Activated CD4-positive, alpha-beta T cell treated with anti-CD3 and anti-CD28 coated beads for 36 hours (primary cell): ENCODE measurements at regions of chr1 and their contacts with region 1.

Region 1: DNA sequence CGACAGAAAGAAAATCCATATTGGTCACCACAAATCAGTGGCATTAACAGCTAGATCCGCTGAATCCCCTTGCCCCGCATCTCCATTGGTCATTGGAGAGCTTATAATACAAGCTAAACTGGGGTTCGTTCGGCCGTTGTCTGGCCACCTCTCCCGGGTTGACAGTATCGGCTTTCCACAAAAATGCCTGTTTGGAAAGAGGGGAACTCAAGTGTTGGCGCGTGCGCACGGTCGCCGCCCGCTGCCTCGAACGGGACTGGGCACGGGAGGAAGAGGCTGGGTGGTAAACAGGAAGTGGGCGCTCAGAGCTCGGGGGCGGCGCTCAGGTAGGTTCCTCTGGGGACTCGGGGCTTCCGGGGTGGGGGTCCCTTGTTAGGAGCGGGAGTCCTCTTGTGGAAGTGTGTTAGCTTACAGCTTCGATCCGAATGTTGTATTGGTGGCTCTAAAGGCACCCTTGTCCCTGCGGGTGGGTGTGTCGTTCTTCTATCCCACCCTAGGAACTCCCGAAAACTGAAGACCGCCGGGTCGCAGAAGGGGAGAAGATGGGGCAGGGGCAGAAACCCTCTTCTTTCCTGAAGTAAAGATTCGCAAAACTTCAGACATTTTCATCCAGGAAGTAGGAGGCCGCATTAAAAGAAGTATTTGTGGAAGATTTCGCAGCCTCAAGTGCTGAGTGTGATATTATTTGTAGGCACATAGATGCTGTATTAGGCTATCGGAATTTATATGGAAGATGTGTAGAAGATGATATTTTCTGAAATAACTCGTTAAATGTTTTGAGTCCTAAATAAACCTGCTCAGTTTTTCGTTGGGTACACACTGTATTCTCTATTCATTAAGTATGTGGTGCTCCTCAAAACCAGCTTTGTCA is 962 bp downstream of the BROX start:
- DNase-seq: peak; percentile 92
- ATAC-seq: peak; percentile 68
- H3K4me3 Mint-ChIP-seq: peak overlapping the region; percentile 98
- H3K27ac Mint-ChIP-seq: peak overlapping the region; percentile 100
- H3K4me1 Mint-ChIP-seq: peaks cover 37% of the 10 kb centered on the region
- H3K27me3 Mint-ChIP-seq: no peaks in the 10 kb centered on the region

Region 2: DNA sequence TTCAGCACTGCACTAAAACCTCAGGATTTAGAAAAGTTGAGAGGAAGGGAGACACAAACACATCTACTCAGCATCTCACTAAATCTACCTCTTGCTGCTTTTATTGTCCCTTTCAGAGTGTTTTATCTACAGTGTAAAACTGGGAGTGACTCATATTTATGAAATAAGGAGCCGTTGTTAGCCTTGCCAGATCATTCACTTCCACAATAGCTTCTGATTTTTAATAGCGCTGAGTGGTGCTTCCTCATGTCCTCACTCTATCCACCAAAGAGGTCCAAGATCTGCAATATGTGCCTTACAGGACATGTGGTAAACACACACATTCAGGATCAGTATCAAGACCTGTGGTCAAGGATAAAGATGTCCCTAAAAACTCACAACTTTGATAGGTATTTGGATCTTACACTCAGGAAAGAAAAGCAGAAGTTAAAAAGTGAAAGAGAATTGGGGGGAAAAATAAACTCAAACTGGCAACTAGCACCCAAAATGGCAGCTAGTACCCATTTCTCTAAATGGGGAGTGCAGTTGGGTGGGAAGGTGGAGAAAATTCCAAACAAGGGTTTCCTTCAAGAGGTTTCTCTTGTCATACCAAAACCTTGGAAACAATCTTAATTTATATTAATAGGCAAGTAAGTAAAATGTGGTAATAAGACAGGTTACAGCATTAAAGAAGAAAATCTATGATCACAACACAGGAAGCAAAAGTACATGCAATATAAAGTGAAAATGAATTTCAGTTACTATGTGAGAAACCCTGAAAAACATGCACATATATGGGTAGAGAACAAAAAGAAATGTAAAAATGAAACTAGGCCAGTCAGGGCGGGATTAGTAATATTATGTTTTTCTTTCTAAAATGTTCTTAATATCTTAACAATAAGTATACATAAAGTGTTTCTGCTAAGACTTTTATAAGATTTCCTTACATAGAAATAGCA is 987.3 kb before region 1 on chr1:
- CTCF ChIA-PET with region 1: no interaction called
- POLR2A ChIA-PET with region 1: no interaction called
- intact Hi-C with region 1: loop called in 1 of 2 experiments (anchors 5 kb)
- DNase-seq: no peak
- ATAC-seq: peak; percentile 86
- H3K4me3 Mint-ChIP-seq: peak overlapping the region; percentile 39
- H3K27ac Mint-ChIP-seq: peak overlapping the region; percentile 94
- H3K4me1 Mint-ChIP-seq: peaks cover 78% of the 10 kb centered on the region
- H3K27me3 Mint-ChIP-seq: no peaks in the 10 kb centered on the region

Region 3: GRCh38 chr1:222617367-222617951 is 95.9 kb before region 1 on chr1:
- CTCF ChIA-PET with region 1: no interaction called
- POLR2A ChIA-PET with region 1: interaction called, 3 read pairs
- intact Hi-C with region 1: loop called (anchors 1 kb)
- DNase-seq: peak; percentile 94
- ATAC-seq: peak; percentile 95
- H3K4me3 Mint-ChIP-seq: peak overlapping the region; percentile 83
- H3K27ac Mint-ChIP-seq: peak overlapping the region; percentile 88
- H3K4me1 Mint-ChIP-seq: peaks cover 31% of the 10 kb centered on the region
- H3K27me3 Mint-ChIP-seq: peaks cover 11% of the 10 kb centered on the region

Region 4: GRCh38 chr1:222654849-222655248 is 58.5 kb before region 1 on chr1:
- CTCF ChIA-PET with region 1: no interaction called
- POLR2A ChIA-PET with region 1: no interaction called
- intact Hi-C with region 1: loop called (anchors 1 to 2 kb)
- DNase-seq: peak; percentile 80
- ATAC-seq: peak; percentile 89
- H3K4me3 Mint-ChIP-seq: peak overlapping the region; percentile 20
- H3K27ac Mint-ChIP-seq: peak overlapping the region; percentile 86
- H3K4me1 Mint-ChIP-seq: peaks cover 54% of the 10 kb centered on the region
- H3K27me3 Mint-ChIP-seq: no peaks in the 10 kb centered on the region

Region 5: GRCh38 chr1:223363856-223364684 is 650.7 kb after region 1 on chr1 and contains the start of gene SUSD4:
- CTCF ChIA-PET with region 1: no interaction called
- POLR2A ChIA-PET with region 1: no interaction called
- intact Hi-C with region 1: loop called in 1 of 2 experiments (anchors 1 kb)
- DNase-seq: peak; percentile 82
- ATAC-seq: peak; percentile 90
- H3K4me3 Mint-ChIP-seq: peak within 1 kb of the TSS; percentile 80
- H3K27ac Mint-ChIP-seq: peak within 1 kb of the TSS; percentile 37
- H3K4me1 Mint-ChIP-seq: peaks cover 18% of the 10 kb centered on the region
- H3K27me3 Mint-ChIP-seq: peaks cover 11% of the 10 kb centered on the region
- total RNA-seq, gene SUSD4: 1.9 to 2.2 TPM